ENCODE measurements at regions of chr1 and their contacts with region 1.

Region 1: DNA sequence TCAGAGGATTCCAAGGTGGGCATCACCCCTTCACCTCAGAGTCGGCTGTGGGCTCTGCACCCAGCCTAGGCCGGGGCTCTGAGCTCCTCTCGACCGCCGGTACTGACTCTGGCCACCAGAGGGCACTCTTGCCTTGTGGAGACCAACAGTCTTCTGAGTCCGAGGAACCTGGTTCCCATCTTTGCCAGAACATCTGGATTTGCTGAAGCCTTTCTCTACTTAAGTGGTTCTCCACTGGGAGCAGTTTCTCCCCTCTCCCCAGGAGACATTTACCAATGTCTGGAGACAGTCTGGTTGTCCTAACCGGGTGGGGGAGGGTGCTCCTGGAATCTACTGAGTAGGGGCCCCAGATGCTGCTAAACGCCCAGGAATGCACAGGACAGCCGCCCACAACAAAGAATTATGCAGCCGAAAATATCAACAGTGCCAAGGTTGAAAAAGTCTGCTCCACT is 9.4 kb downstream of the ETV3L start:
- DNase-seq: peak; percentile 85 to 94 (median 90)
- H3K4me3 ChIP-seq: no peak overlapping the region
- H3K27ac ChIP-seq: no peak overlapping the region
- H3K4me1 ChIP-seq: no peaks in the 10 kb centered on the region
- H3K27me3 ChIP-seq: no peaks in the 10 kb centered on the region
- CTCF ChIP-seq: peak; percentile 95

Region 2: DNA sequence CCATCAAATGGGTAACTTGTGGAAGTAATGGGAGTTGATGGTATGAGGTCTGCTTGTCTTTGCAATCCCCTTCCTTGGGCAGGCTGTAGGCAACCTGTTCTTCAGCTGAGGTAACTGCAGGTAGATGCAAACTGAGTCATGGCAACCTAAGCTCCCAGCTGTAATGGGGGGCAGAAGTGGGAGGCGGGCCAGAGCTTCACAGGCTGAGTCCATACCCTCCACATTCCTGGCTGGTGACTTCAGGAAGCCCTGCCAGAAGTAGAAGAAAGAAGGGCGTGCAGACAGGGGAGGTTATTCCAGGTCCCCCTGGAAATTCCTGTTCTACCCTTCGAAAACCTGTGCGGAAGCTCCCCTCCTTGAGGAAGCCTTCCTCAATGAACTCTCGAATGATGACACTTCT is 89.5 kb before region 1 on chr1:
- intact Hi-C with region 1: no loop called
- DNase-seq: no peak
- H3K4me3 ChIP-seq: no peak overlapping the region
- H3K27ac ChIP-seq: no peak overlapping the region
- H3K4me1 ChIP-seq: no peaks in the 10 kb centered on the region
- H3K27me3 ChIP-seq: no peaks in the 10 kb centered on the region
- CTCF ChIP-seq: no peak

Region 3: GRCh38 chr1:157156058-157156541 is 65.9 kb after region 1 on chr1:
- intact Hi-C with region 1: loop called (anchors 5 kb)
- DNase-seq: peak; percentile 76 to 90 (median 86)
- H3K4me3 ChIP-seq: no peak overlapping the region
- H3K27ac ChIP-seq: no peak overlapping the region
- H3K4me1 ChIP-seq: peaks cover 0 to 19% (median 12%) of the 10 kb centered on the region in 3 donors
- H3K27me3 ChIP-seq: no peaks in the 10 kb centered on the region
- CTCF ChIP-seq: peak; percentile 89

Measured in kidney (tissue), 22 donors.